ENCODE measurements at regions of chr1 and their contacts with region 1.

Region 1: DNA sequence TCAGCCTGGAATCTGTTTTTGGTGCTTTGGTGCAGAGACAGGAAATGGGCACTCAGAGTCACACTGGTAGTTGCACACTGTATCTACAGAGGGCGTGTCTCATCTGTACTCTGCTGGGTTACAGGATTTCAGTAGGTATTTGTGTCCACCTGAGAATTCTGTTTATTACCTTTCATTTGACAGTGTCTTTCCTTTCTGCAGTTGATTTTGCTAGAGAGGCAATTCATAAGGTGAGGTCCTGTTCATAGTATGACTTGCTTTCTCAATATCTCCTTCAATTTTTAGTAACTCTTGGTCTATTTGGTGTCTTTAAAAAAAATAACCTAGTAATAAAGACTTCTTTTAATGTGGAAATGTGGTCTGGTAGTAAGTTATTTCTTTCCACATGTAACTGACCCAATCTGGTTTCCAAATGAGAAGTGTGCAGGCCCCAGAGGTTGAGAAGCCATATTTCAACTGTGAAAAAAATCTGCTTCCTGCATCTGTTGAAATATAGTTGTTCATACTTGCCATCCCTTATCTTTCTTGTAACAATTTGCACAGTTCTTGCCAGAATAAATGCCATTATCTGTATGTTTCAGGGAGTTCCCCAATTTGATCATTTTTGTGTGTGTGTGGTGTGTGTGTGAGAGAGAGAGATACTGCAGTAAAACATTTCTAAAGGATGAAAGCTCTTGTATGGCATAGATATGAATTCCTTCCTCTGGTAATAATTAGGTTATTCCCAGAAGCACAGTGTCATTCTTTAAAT is 78.4 kb upstream of the DNAJC6 start:
- DNase-seq: no peak
- ATAC-seq: peak; percentile 65
- H3K4me3 ChIP-seq: no peak overlapping the region
- H3K27ac ChIP-seq: no peak overlapping the region
- H3K4me1 ChIP-seq: no peaks in the 10 kb centered on the region
- H3K27me3 ChIP-seq: no peaks in the 10 kb centered on the region
- CTCF ChIP-seq: no peak
- EP300 ChIP-seq: no peak
- POLR2A ChIP-seq: no peak
- RAD21 ChIP-seq: 0 out of 2 replicates have a peak, but pooled peaks have one; percentile 4

Region 2: DNA sequence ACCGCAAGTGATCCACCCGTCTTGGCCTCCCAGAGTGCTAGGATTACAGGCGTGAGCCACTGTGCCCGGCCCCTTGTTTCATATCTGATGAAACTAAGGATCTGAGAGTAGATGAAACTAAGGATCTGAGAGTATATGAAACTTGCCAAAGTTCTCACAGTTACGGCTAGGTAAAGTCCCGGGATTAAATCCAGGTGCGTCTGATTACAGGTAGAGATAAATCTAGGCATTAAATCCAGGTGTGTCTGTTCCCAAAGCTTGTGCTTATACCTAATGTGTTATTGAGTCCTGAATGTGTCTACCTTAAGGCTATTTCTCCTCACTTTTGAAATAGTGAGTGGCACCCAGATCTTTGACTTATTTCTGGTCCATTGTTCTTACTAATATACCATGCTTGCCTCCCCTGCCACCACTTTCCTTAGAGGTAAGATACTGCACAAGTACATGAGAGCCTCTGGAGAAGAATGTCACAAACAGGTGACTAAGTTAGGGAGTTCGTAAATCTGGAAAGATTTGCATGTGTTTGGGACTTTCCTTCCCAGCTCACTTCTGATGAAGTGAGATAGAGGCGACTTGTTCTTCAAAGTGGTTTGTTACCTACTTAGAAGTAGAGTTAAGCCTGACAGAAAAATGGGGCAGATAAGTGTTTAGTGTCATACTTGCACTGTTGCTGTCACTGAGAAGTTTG is 16.4 kb before region 1 on chr1:
- CTCF ChIA-PET with region 1: interaction called, 17 read pairs
- POLR2A ChIA-PET with region 1: interaction called, 3 read pairs
- RAD21 ChIA-PET with region 1: interaction called, 4 read pairs
- SMC1A ChIA-PET with region 1: interaction called, 7 read pairs
- in situ Hi-C with region 1: no loop called
- intact Hi-C with region 1: no loop called
- DNase-seq: no peak
- ATAC-seq: no peak; the same call in 2 of the 3 replicates
- H3K4me3 ChIP-seq: no peak overlapping the region
- H3K27ac ChIP-seq: no peak overlapping the region
- H3K4me1 ChIP-seq: peaks cover 15% of the 10 kb centered on the region
- H3K27me3 ChIP-seq: no peaks in the 10 kb centered on the region
- CTCF ChIP-seq: no peak
- EP300 ChIP-seq: no peak
- POLR2A ChIP-seq: no peak
- RAD21 ChIP-seq: no peak

Measured in GM12878 (cell line).